Right cardiac atrium (tissue), 5 donors: ENCODE measurements at regions of chr12 and their contacts with region 1.

Region 1: DNA sequence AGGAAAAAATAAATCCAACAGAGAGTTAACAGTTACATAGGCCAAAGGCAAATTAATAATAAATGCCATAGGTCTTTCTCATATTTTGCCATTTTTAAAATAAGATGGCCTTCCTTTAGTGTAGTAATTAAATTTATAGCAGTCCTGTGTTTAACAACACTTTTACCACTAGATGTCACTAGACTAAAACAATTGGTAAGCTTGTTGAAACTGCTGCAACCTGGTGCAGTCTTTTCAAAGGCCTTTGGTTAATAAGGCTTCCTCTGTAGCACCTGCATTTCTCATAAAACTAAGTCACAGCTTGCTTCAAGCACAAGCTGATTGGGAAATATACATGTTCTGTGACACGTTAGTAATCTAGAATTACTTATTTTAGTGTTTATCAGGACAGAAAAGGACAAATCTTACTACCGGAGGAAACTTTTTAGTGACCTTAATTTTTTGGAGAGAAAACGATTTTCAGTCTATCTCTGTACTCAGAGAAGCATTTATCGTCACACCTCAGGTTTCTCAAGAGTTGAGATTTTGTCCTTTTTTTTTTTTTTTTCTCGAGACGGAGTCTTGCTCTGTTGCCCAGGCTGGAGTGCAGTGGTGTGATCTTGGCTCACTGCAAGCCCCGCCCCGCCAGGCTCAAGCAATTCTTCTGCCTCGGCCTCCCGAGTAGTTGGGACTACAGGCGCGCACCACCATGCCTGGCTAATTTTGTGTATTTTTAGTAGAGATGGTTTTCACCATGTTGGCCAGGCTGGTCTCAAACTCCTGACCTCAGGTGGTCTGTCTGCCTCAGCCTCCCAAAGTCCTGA is 20.0 kb downstream of the BORCS5 start:
- DNase-seq: no peak
- ATAC-seq: peak; percentile 79
- H3K4me3 ChIP-seq: no peak overlapping the region
- H3K27ac ChIP-seq: no peak overlapping the region
- H3K4me1 ChIP-seq: no peaks in the 10 kb centered on the region
- H3K27me3 ChIP-seq: no peaks in the 10 kb centered on the region

Region 2: DNA sequence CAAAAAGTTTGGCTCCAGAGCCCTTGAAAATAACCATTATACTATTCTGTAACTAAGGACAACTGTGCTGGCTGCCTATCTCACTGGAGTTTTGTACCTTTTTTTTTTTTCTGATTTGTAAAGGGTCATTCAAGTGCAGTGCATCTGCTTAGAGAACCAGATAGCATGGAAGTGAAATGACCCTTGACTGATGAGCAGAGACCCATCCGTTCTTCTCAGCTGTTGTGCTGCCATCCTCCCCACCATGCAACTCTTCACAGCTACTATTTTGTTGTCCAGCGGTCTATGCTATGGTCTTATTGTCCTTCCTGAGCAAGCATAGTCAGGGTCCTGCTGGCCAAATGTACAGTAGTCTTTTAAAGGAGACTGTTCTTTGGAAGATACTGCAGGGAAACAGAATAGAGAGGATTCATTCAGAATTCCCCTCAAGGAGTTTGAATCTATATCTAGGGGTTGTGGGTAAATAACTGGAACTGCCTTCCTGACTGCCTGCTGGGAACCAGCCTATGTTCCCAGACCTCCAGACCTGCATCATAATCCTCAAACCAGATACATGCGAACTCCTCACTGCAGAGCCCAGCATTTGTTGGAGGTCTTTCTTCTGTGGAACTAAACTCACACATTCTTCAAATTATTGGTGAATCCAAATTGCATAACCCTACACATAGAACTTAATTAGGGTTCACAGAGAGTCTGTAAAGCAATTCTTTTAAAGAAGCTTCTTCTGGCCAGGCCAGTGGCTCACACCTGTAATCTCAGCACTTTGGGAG is 278.0 kb after region 1 on chr12:
- intact Hi-C with region 1: loop called in 2 of 4 experiments (anchors 5 kb)
- DNase-seq: no peak
- ATAC-seq: no peak
- H3K4me3 ChIP-seq: no peak overlapping the region
- H3K27ac ChIP-seq: no peak overlapping the region
- H3K4me1 ChIP-seq: no peaks in the 10 kb centered on the region
- H3K27me3 ChIP-seq: no peaks in the 10 kb centered on the region

Region 3: GRCh38 chr12:12704593-12705230 is 327.9 kb after region 1 on chr12:
- intact Hi-C with region 1: loop called in 2 of 4 experiments (anchors 5 kb)
- DNase-seq: peak; percentile 22 to 71 (median 64)
- ATAC-seq: peak; percentile 98
- H3K4me3 ChIP-seq: no peak overlapping the region
- H3K27ac ChIP-seq: no peak overlapping the region
- H3K4me1 ChIP-seq: no peaks in the 10 kb centered on the region
- H3K27me3 ChIP-seq: no peaks in the 10 kb centered on the region